ENCODE measurements at regions of chr11 and their contacts with region 1.

Region 1: GRCh38 chr11:101860696-101861427 is 53.9 kb upstream of the CEP126 start:
- DNase-seq: no peak
- H3K4me3 ChIP-seq: no peak overlapping the region
- CTCF ChIP-seq: peak; percentile 74

Region 2: DNA sequence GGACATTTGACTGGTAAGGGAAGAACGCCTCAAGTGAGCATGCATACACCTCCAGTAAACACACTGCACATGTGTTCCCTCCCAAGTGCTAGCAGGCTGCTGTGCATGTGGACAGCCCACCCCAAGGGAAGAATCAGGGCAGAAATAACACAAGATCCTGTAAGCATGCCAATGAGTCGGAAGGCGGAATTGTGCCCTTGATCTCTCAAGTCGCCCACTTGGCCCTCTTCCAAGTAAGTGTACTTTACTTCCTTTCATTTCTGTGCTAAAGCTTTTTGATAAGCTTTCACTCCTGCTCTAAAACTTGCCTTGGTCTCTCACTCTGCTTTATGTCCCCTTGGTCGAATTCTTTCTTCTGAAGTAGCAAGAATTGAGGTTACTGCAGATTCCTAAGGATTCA is 416.7 kb before region 1 on chr11:
- CTCF ChIA-PET with region 1: interaction called, 12 read pairs
- POLR2A ChIA-PET with region 1: interaction called, 3 read pairs
- DNase-seq: no peak
- H3K4me3 ChIP-seq: no peak overlapping the region
- CTCF ChIP-seq: no peak

Region 3: DNA sequence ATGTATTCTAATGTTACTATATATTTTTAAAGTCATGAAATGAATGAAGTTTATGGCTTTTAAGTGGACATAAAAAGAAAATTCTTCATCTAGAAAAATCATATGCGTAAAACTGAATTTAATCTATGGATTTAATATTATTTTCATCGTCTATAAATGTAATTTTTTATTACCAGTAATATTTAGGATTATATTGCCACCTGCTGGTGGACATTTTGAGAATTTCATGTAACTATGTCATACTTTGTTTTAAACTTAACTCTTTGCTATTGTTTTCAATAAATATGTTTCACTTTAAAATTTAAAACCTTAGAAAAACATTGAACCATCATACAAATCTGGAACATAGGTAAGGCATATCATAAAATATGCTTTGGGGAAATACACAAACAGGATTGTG is 12.6 kb before region 1 on chr11:
- CTCF ChIA-PET with region 1: interaction called, 19 read pairs
- POLR2A ChIA-PET with region 1: no interaction called
- DNase-seq: no peak
- H3K4me3 ChIP-seq: no peak overlapping the region
- CTCF ChIP-seq: no peak

Region 4: DNA sequence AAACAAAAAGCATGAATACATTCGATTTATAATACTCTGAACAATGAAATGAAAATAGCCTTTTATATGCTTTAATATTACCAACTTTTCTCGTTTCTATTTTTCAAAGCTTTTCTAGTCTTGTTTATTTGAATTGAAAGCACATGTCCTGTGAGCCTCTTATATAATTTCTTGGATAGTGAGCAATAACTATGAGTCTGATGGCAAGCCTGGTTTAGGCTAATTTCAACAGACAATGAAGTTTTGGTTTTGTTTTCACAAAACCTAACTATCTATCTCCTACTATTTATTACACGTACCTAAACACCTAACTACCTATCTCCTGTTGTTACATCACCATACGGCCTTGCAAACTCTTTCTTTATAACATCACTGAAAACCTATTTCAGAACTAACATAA is 24.8 kb after region 1 on chr11:
- CTCF ChIA-PET with region 1: interaction called, 130 read pairs
- POLR2A ChIA-PET with region 1: no interaction called
- DNase-seq: no peak
- H3K4me3 ChIP-seq: no peak overlapping the region
- CTCF ChIP-seq: no peak

Region 5: GRCh38 chr11:101914738-101915426 is 54.0 kb after region 1 on chr11 and contains the start of gene CEP126:
- CTCF ChIA-PET with region 1: interaction called, 21 read pairs
- POLR2A ChIA-PET with region 1: interaction called, 5 read pairs
- DNase-seq: peak; percentile 74
- H3K4me3 ChIP-seq: peak within 1 kb of the TSS; percentile 85
- CTCF ChIP-seq: peak; percentile 75

Region 6: DNA sequence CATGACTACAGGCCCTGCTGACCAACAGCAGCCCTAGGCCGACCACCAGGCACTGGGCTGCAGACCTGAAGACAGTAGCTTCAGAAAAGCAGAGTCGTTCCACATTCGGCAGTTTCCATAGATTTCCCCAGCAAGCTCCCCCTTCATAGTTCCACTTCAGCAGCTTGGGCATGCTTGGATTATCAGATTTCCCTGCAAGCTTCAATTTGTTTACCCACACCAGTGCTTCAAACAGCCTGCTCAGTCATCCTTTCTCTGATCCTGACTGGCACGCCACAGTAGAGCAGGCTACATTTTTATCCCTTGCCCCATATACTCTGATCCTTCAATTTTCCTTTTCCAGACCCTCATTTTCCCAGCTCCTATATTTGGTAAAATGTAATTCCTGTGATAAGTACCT is 135.2 kb after region 1 on chr11:
- CTCF ChIA-PET with region 1: interaction called, 19 read pairs
- POLR2A ChIA-PET with region 1: no interaction called
- DNase-seq: no peak
- H3K4me3 ChIP-seq: no peak overlapping the region
- CTCF ChIP-seq: no peak